H1 (cell line): ENCODE measurements at regions of chr3 and their contacts with region 1.

Region 1: GRCh38 chr3:81173514-81173913 is 587.9 kb downstream of the GBE1 start:
- DNase-seq: no peak
- H3K4me3 ChIP-seq: no peak overlapping the region
- H3K27ac ChIP-seq: no peak overlapping the region
- H3K4me1 ChIP-seq: peaks cover 0 to 8% (median 4%) of the 10 kb centered on the region in 4 experiments; a peak in 4 of 7 replicates
- H3K27me3 ChIP-seq: no peaks in the 10 kb centered on the region
- CTCF ChIP-seq: peak in 2 of 3 experiments; percentile 29 to 51; a peak in 2 of 4 replicates
- EP300 ChIP-seq: no peak
- POLR2A ChIP-seq: no peak
- RAD21 ChIP-seq: peak; percentile 39 to 54

Region 2: GRCh38 chr3:81186412-81186811 is 12.9 kb after region 1 on chr3:
- CTCF ChIA-PET with region 1: interaction called, 18 read pairs
- POLR2A ChIA-PET with region 1: no interaction called
- DNase-seq: no peak
- H3K4me3 ChIP-seq: no peak overlapping the region
- H3K27ac ChIP-seq: no peak overlapping the region
- H3K4me1 ChIP-seq: no peaks in the 10 kb centered on the region; a peak in 1 of 7 replicates
- H3K27me3 ChIP-seq: no peaks in the 10 kb centered on the region
- CTCF ChIP-seq: no peak
- EP300 ChIP-seq: no peak
- POLR2A ChIP-seq: no peak
- RAD21 ChIP-seq: no peak